Posterior vena cava (tissue), 2 donors: ENCODE measurements at regions of chr20 and their contacts with region 1.

Region 1: DNA sequence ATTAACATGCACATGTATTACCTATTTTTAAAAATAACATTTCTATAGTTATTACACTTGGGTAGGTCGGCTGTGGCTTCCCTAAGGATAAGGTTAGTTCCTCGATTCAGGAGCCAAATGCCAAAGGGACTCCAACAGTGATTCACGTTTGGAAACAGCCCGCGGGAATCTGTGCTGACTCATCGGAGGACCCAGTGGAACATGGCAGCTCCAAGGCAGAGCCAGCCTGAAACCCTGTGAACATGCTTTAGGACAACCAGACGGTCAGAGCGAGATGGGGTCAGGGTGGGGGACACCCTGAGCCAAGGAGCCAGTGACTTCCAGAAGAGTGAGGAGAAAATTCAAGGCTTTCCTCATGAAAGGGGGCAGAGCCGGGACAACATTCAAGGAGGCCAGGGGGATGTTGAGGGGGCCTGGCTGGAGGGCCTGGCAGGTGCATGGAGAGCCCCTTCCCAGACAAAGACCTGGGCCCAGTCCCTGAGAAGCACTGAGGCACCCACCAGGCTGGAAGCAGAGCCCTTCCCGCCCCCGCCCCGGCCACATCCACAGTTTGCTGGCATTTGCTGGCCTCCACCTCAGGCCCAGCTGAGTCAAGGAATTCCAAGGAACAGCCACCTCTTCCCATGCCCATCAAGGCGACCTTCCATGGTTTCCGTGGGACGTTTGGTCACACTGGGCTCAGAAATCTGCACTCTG is 133.2 kb downstream of the SNX5 start:
- DNase-seq: peak; percentile 91

Region 2: GRCh38 chr20:17796091-17796563 is 39.3 kb before region 1 on chr20:
- intact Hi-C with region 1: no loop called
- DNase-seq: peak; percentile 81

Region 3: DNA sequence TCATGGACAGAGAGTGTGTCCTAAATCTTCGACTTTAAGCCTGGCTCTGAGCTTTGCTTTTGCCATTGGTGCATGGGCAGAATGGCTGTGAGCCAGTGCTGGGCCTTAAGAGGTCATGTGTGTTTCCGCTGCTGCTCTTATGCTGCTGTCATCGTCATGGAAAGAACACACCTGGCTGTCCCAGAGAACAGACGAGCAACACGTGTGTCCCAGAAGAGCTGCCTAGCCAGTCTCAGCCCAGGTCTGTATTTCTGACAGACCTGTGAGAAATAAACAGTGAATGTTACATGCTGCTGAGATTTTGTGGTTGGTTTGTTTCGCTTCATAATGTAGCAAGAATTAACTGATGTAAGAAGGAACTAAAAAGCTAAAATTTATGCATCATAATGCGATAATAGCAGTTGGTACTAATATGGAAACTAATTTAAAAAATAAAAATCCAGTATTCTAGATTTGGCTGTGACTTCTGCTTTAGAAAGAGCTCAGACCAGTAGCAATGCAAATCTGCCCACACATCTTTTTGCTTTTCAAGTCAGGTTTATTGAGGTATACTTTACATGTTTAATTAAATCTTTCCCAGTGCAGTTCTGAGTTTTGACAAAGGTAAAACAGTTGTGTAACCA is 966.7 kb after region 1 on chr20:
- intact Hi-C with region 1: loop called in 1 of 2 experiments (anchors 5 kb)
- DNase-seq: no peak